A549 (cell line): ENCODE measurements at regions of chr5 and their contacts with region 1.

Region 1: GRCh38 chr5:150161242-150162141 is 5.1 kb upstream of the CDX1 start:
- DNase-seq: peak; percentile 82 to 92
- ATAC-seq: peak; percentile 89 to 95
- H3K4me3 ChIP-seq: peak overlapping the region; percentile 37
- H3K27ac ChIP-seq: peak overlapping the region; percentile 75 to 79
- H3K4me1 ChIP-seq: peaks cover 8% of the 10 kb centered on the region; the same call in 1 of the 3 replicates
- CTCF ChIP-seq: peak; percentile 67
- EP300 ChIP-seq: no peak
- POLR2A ChIP-seq: no peak
- RAD21 ChIP-seq: peak; percentile 70 to 87

Region 2: DNA sequence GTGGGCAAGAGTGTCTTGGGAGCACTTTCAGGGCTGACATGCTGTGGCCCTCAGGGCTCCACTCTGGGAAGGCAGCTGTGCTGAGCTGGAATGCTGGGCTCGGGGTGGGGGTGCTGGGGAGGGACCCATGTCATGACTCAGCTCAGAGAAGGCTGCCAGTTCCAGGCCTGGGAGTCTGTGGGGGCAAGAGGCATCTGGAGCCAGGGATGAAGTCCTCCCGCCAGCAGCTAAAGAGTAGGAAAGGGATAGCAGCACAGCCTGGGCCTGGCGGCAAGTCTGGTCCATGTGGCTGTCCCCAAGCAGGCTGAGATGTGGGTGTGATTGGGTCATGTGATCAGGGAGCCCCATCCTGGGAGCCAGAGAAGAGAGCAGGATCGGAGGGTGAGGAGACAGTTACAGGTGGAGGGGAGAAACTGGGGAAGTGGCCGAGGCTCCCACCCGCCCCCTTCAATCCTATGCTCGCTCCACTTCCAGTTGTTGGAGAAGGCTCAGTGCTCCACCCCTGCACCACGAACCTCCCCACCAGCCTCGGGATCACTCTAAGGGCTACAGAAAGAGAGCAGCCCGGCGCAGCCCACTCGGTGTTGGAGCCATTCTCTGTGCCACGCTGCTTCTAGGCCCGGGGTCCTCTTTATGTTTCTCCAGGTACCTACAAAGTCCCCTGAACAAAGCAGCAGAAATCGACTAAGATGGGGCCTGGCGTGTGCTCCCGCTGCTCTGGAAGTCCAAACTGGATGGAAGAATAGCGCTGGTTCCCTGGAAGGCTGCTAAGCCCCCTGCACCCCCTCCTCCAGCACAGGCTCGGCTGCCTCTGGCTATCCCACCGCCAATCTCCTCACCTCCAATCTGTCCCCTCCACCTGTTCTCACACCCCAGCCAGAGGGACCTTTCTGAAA is 17.9 kb before region 1 on chr5:
- CTCF ChIA-PET with region 1: interaction called, 17 read pairs
- POLR2A ChIA-PET with region 1: no interaction called
- DNase-seq: peak; percentile 57 to 62
- ATAC-seq: peak; percentile 75
- H3K4me3 ChIP-seq: no peak overlapping the region
- H3K27ac ChIP-seq: peak overlapping the region; percentile 93 to 98
- H3K4me1 ChIP-seq: peaks cover 57% of the 10 kb centered on the region
- CTCF ChIP-seq: no peak
- EP300 ChIP-seq: peak in 1 of 2 experiments; percentile 28; a peak in 1 of 5 replicates
- POLR2A ChIP-seq: no peak
- RAD21 ChIP-seq: no peak

Region 3: DNA sequence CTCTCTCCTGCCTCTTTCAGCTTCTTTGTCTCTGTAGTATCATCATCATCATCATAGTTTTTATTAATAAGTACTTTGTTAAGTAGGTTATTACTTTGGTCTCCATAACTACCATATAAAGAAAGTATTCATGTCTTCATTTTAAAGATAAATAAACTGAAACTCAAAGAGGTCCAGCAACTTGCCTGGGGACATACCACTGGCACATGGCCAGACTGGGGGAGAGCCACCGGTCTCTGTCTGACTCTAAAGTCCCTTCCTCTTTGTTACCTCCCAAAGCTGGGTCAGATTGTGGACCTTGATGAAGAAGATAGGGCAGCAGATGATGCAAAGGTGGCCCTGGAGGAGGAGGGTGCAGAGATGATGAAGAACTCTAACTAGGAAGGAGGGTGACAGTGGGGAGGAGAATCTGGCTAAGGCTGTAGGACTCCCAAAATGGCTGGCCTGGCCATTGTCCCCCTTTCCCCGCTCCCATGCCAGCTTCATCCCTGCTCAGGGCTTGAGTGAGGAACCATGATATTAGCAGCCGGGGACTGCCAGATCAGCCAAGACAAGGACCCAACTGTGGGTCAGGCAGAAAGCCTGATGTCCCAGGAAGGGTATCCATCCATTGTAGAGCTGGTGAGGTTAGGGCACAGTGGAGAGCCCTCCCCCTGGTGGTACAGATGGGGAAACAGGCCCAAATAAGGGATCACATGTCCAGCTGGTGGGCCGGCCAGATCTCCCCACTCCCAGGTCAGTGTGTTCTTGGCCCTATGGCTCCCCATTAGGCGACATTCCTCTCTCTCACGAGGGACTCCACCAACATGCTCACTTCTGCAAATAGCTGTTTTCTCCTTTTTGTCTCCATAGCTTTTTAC is 13.8 kb after region 1 on chr5:
- CTCF ChIA-PET with region 1: interaction called, 27 read pairs
- POLR2A ChIA-PET with region 1: no interaction called
- DNase-seq: peak; percentile 53 to 81
- ATAC-seq: peak; percentile 72 to 96
- H3K4me3 ChIP-seq: no peak overlapping the region
- H3K27ac ChIP-seq: no peak overlapping the region
- H3K4me1 ChIP-seq: no peaks in the 10 kb centered on the region
- CTCF ChIP-seq: peak; percentile 38
- EP300 ChIP-seq: no peak
- POLR2A ChIP-seq: no peak
- RAD21 ChIP-seq: peak in 1 of 2 experiments; percentile 42; a peak in 2 of 5 replicates

Region 4: DNA sequence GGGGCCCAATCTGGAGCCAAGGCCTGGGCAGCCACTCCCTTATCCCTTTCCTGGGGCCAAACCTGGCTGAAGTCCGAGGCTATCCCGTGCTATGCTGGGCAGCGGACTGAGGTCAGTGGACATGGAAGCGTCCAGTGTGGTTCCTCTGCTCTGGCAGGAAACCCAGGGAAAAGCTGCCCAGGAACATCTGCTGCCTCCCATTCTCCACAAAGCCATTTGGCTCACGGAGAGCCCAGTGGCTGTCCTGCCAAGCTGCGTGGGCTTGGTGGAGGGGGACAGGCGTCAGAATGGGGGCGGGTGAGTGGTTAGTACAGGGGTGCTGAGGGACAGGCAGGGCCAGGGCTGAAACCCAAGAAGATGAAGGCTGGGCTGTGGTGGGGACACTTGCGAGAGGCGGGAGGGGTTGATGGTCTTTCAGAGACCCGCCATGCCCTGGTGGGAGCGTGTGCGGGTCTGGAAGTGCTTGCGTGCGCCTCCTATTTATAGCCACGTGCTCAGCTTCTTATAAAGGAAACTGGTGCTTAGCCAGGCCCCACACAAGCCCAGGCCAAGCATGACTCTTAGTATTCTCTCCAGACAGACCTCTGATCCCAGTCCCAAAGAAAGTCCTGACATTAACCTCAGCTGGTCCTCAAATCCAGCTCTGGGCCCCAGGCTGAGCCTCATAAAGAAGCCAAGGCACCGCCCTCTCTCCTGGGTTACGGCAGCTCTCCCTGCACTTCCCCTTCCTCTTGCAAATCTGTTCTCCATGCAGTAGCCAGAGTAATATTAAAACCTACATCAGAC is 18.9 kb after region 1 on chr5:
- CTCF ChIA-PET with region 1: interaction called, 27 read pairs
- POLR2A ChIA-PET with region 1: no interaction called
- DNase-seq: no peak
- ATAC-seq: no peak
- H3K4me3 ChIP-seq: no peak overlapping the region
- H3K27ac ChIP-seq: no peak overlapping the region
- H3K4me1 ChIP-seq: no peaks in the 10 kb centered on the region
- CTCF ChIP-seq: no peak
- EP300 ChIP-seq: no peak
- POLR2A ChIP-seq: no peak
- RAD21 ChIP-seq: no peak

Region 5: DNA sequence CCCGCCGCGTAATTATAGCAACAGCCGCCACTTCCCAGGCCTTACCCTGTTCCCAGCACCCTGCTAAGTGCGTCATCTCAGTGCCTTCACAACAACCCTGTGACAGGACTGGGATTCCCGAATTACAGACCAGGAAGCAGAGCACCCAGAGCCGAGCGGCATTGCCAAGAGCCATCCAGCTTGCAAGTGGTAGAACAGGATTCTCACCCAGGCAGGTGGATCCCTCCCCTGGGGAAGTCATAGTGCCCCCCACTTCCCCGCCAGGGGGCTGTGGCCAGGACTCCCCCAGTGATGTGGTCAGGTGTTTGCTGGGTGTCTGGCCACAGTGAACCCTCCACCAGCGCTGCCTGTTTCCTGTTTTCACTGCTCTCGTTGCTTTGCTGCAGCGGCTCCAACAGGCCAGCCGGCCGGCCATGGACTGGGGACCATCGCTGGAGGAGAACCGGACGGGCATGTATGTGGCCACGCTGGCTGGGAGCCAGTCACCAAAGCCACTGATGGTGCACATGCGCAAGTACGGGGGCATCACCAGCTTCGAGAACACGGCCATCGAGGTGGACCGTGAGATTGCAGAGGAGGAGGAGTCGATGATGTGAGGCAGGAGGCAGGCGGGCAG is 47.6 kb after region 1 on chr5:
- CTCF ChIA-PET with region 1: interaction called, 140 read pairs
- POLR2A ChIA-PET with region 1: no interaction called
- DNase-seq: peak in 1 of 2 experiments; percentile 11
- ATAC-seq: peak in 1 of 2 experiments; percentile 35; a peak in 3 of 6 replicates
- H3K4me3 ChIP-seq: no peak overlapping the region
- H3K27ac ChIP-seq: peak overlapping the region in 1 of 2 experiments; percentile 66; a peak in 3 of 6 replicates
- H3K4me1 ChIP-seq: peaks cover 7% of the 10 kb centered on the region; the same call in 1 of the 3 replicates
- CTCF ChIP-seq: no peak
- EP300 ChIP-seq: no peak
- POLR2A ChIP-seq: no peak
- RAD21 ChIP-seq: no peak